T-cell (primary cell): ENCODE measurements at regions of chr3 and their contacts with region 1.

Region 1: DNA sequence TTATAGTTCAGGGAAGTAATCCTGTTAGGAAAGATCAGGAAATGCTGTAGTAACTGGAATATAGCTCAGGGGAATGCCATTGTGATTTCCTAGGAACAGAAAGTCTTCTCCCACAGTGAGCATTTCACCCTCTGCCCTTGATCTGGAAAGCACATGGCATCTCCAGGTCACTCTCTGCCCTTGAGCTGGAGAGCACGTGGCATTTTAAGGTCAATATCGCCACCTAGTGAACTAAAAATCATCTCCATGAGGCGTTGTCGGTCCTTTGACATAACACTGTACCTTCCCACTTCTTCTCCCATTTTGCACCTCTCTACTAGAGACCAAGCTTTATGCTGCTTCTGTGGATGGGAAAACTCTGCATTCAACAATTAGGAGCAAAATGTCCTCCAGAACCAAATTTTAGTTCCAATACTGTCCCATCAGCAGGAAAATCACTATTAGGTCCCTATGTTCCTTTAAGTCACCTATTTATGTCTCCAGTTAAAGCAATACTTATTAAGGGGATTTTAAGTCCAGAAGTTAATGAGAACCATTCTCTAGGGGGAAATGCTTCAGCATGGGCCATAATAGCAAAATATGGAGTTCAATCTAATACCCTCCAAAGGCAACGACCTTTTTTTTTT is 54.7 kb upstream of the GK5 start:
- DNase-seq: peak in 24 of 35 experiments; percentile 1 to 80 (median 21)
- ATAC-seq: peak in 3 of 4 experiments; percentile 80 to 84 (median 81)
- H3K4me3 ChIP-seq: no peak overlapping the region
- H3K4me3 Mint-ChIP-seq: no peak overlapping the region
- H3K27ac ChIP-seq: no peak overlapping the region
- H3K27ac Mint-ChIP-seq: no peak overlapping the region
- H3K4me1 ChIP-seq: peaks cover 0 to 13% of the 10 kb centered on the region in 2 experiments
- H3K4me1 Mint-ChIP-seq: peaks cover 0 to 23% (median 11%) of the 10 kb centered on the region in 3 donors
- H3K27me3 ChIP-seq: no peaks in the 10 kb centered on the region
- H3K27me3 Mint-ChIP-seq: no peaks in the 10 kb centered on the region

Region 2: GRCh38 chr3:142124243-142124642 is 155.8 kb before region 1 on chr3:
- CTCF ChIA-PET with region 1: interaction called, 9 to 10 read pairs
- POLR2A ChIA-PET with region 1: interaction called in 1 of 2 experiments, 3 read pairs
- DNase-seq: no peak
- ATAC-seq: no peak
- H3K4me3 ChIP-seq: no peak overlapping the region
- H3K4me3 Mint-ChIP-seq: no peak overlapping the region
- H3K27ac ChIP-seq: no peak overlapping the region
- H3K27ac Mint-ChIP-seq: no peak overlapping the region
- H3K4me1 ChIP-seq: peaks cover 0 to 2% of the 10 kb centered on the region in 2 experiments
- H3K4me1 Mint-ChIP-seq: peaks cover 0 to 11% (median 7%) of the 10 kb centered on the region in 3 donors
- H3K27me3 ChIP-seq: no peaks in the 10 kb centered on the region
- H3K27me3 Mint-ChIP-seq: no peaks in the 10 kb centered on the region

Region 3: DNA sequence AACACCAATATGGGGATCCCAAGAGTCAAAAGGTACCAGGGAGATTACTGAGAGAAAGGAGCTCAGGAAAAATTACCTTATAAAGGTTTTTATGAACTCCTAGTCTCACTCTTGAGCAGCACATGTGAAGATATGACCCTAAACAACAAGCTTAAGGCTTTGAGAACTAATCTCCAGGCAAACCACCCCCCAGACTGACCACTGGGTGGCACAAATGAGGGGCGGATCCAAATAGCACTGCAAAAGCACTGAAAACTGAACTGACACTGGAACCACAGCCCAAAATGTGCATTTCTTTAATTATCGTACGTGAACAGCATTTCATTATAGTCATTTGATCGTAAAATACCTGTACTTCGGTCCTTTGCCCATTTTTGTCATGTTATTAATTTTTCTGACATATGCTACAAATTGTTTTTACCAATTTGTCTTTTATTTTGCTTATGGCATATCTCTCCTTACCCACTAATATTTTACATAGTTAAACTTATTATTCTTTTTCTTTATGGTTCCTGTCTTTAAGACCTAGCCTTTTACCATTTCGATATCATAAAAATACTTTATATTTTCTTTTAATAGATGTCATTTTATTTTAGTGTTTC is 99.2 kb before region 1 on chr3:
- CTCF ChIA-PET with region 1: interaction called, 3 to 12 read pairs
- POLR2A ChIA-PET with region 1: no interaction called
- DNase-seq: peak in 25 of 35 experiments; percentile 1 to 44 (median 15)
- ATAC-seq: no peak
- H3K4me3 ChIP-seq: no peak overlapping the region
- H3K4me3 Mint-ChIP-seq: no peak overlapping the region
- H3K27ac ChIP-seq: no peak overlapping the region
- H3K27ac Mint-ChIP-seq: no peak overlapping the region
- H3K4me1 ChIP-seq: no peaks in the 10 kb centered on the region
- H3K4me1 Mint-ChIP-seq: no peaks in the 10 kb centered on the region
- H3K27me3 ChIP-seq: no peaks in the 10 kb centered on the region
- H3K27me3 Mint-ChIP-seq: no peaks in the 10 kb centered on the region